ENCODE measurements at regions of chr5 and their contacts with region 1.

Region 1: DNA sequence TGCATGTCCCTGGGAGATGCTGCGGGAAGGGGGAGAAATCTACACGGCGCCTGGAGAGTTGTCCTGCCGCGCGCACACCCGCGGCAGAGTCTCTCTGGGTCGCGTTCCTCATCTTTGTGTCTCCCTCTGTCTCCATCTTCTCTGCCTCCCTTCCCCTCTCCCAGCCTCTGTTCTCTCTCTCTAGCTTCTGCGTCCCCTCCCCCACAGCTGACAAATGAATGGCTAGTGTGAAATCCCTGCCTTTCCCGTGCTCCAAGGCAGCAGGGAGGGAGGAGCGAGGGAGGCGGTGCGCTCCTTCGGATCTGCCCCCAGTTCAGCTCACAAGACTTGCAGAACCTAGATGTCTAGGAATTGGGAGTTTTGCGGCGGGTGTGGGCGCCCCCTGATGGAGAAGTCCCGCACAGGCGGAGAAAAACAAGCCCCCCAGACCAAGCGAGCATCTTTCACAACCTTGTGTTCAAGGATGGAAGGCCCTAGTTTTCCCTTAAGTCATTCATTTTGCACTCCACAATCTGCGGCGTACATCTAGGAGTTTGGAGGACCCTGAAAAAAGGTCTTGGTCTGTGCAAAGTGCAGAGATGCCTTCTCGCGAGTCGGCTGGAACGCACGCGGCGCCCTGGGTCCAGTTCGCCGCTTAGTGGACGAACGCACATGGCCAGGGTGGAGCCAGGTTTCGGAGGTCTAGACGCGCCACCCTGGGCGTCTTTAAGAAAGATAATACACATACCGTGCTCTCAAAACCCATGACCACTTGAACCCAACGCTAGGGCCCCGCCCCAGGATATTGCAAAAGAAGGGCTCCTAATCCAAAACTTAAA is 2.0 kb downstream of the VCAN start:
- DNase-seq: peak; percentile 98

Region 2: DNA sequence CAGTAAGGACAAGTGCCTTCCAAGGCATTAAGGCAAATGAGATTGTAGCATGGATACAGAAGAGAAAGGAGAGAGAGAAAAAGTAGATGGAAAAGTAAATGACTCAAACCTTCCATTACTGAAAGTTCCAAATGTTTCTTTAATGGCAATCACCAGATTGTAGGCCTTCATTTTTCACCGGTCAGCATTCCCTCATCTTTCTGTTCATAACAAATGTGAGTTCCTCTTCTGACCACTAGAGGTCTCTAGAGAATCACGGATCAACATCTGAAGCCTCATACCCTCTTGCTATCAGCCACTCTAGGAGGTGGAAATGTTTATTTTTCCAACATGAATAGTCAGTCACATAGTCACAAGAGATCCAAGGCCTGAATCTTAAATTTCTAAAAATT is 1121.8 kb before region 1 on chr5:
- intact Hi-C with region 1: loop called in 1 of 2 experiments (anchors 10 kb)
- DNase-seq: no peak

Region 3: GRCh38 chr5:82641331-82642003 is 832.1 kb before region 1 on chr5:
- intact Hi-C with region 1: loop called in 1 of 2 experiments (anchors 10 kb)
- DNase-seq: no peak

Region 4: GRCh38 chr5:83072966-83073365 is 400.6 kb before region 1 on chr5:
- intact Hi-C with region 1: loop called in 1 of 2 experiments (anchors 5 kb)
- DNase-seq: no peak

Region 5: GRCh38 chr5:83488271-83488670 is 14.7 kb after region 1 on chr5:
- intact Hi-C with region 1: no loop called
- DNase-seq: no peak